ENCODE measurements at regions of chr10 and their contacts with region 1.

Region 1: DNA sequence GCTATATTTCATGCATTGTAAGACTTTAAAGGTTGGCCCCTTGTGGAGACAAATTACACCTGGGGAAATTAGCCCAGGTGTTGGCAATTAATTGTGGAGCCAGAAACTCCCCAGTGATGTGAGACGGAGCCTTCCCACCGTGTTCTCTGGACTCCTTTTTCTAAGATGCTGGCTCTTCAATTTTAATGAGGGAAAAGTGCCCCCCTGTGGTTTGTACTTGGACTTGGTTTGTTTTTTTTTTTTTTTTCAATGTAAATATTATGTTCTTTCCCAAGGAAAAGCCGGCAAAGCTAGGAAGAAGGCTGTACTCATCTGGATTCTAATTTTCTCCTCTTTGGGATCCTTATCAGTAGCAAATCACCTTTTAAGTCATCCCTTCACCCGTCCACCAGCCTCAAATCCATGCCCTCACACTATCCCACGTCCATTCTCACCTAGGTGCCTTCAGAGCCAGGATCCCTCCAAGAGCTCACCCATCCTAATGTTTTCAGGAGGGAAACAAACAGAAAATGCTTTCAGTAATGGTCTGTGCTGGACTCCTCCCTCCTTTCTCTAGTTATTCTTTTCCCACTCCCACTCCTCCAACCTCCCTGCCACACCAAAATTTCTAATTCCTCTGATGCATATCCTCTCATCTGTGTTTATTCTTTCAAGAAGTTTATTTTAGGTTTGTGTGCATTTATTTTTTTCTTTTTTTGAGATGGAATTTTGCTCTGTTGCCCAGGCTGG is 20.4 kb upstream of the ST8SIA6 start:
- DNase-seq: no peak

Region 2: DNA sequence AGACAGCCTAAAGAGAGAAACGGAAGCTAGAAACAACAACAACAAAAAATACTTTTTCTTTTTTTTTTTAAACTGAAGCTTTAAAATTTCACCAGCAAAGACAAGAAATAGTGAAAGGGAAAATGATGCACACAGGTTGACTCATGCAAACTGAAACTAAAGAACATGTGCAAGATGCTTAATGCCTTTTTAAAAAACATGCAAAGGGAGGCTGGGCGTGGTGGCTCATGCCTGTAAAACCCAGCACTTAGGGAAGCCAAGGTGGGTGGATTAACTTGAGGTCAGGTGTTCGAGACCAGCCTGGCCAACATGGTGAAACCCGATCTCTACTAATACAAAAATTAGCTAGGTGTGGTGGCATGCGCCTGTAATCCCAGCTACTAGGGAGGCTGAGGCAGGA is 330.0 kb before region 1 on chr10:
- intact Hi-C with region 1: no loop called
- DNase-seq: no peak

Region 3: GRCh38 chr10:17512341-17513001 is 37.7 kb after region 1 on chr10:
- intact Hi-C with region 1: no loop called
- DNase-seq: no peak

Region 4: DNA sequence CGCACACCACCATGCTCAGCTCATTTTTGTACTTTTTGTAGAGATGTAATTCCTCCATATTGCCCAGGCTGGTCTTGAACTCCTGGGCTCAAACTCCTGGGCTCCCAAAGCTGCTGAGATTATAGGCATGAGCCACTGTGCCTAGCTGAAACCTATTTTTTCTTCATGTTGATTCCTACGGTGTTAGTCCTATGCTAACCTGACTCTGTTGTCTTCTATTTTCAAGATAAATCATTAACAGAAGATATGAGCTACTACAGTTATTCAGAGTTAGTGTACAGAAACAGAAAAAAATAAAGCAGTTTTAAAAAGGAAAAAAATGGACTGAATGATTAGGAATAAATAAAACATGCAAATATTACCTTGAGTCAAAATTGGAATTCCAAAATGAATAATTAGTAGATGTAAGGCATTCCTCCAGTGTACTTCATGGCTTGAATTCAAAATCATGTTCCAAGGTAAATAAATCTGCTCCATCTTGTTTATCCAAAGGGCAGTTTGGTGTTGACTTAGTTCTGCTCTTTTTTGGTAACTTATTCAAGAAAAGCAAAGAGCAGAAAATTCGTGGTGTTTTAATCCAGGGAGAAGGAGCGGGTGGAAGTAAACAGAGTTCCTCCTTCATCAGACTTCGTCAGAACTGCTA is 851.3 kb after region 1 on chr10:
- intact Hi-C with region 1: loop called in 1 of 2 experiments (anchors 5 kb)
- DNase-seq: no peak